ENCODE measurements at regions of chr7 and their contacts with region 1.

Region 1: DNA sequence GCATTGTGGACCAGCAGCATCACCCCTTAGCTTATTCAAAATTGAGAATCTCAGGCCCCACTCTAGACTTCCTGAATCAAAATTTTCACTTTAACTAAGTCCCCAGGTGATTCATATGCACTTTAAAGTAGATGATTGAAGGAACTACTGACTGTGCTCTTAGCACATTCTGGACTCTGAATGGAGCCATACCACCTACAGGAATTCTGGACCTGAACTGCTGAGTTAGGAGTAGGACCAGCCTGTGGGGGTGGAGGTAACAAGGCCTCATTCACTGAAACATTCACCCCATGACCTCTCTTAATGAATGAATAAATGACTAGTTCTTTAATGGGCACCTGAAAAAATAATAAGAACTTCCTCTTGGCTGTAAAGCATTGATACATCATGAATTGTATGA is 7.3 kb downstream of the PDK4 start:
- DNase-seq: no peak
- ATAC-seq: no peak
- H3K4me3 Mint-ChIP-seq: no peak overlapping the region
- H3K27ac Mint-ChIP-seq: no peak overlapping the region
- H3K4me1 Mint-ChIP-seq: peaks cover 14% of the 10 kb centered on the region
- H3K27me3 Mint-ChIP-seq: no peaks in the 10 kb centered on the region
- CTCF ChIP-seq: no peak

Region 2: DNA sequence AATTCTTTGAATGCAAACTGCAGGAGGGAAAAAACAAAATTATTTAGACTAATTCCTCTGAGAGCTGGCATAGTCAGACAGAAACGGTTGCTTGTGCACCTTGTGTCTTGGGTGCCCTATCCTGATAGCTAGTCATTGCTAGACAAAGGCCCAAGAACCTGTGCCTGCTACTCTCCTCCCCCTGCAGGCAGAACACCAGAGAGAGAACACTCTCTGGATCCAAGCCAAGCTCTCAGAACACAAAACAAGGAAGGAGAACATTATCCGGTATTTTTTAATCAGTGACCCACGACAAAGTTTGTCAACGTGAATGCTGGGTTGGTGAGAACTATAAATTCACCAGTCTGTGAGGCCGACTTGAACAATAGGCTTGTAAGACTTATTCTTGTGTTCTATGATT is 700.5 kb before region 1 on chr7:
- CTCF ChIA-PET with region 1: no interaction called
- POLR2A ChIA-PET with region 1: interaction called, 11 read pairs
- intact Hi-C with region 1: no loop called
- DNase-seq: no peak
- ATAC-seq: no peak
- H3K4me3 Mint-ChIP-seq: no peak overlapping the region
- H3K27ac Mint-ChIP-seq: no peak overlapping the region
- H3K4me1 Mint-ChIP-seq: no peaks in the 10 kb centered on the region
- H3K27me3 Mint-ChIP-seq: peaks cover 5% of the 10 kb centered on the region
- CTCF ChIP-seq: no peak